ENCODE measurements at regions of chr15 and their contacts with region 1.

Region 1: GRCh38 chr15:23648920-23649515 is 1.4 kb upstream of the MAGEL2 start:
- DNase-seq: peak in 1 of 2 donors; percentile 25
- ATAC-seq: no peak
- H3K4me3 ChIP-seq: no peak overlapping the region
- H3K27ac ChIP-seq: no peak overlapping the region
- H3K4me1 ChIP-seq: peaks cover 0 to 3% (median 0%) of the 10 kb centered on the region in 9 donors
- H3K27me3 ChIP-seq: peaks cover 0 to 56% (median 32%) of the 10 kb centered on the region in 7 donors
- CTCF ChIP-seq: peak; percentile 22 to 66 (median 51)

Region 2: DNA sequence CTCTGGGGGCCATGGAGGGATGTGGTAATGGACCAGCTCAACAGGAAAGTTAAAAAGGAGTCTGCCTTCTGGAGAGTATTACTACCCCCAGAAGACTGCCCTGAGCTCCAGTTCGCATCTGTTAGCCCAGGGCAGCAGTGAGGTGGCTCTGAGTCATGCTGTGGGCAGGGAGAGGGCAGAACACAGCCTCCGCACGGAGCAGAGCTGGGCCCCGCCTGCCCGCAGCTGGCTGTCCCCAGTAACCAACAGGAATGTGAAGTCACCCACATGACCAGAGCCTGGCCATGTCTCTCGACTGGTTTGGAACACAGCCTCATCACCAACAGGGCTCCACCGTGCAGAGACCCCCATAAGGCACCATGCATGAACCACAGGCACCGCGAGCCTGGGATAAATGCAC is 731.0 kb before region 1 on chr15:
- intact Hi-C with region 1: no loop called
- DNase-seq: no peak
- ATAC-seq: no peak
- H3K4me3 ChIP-seq: no peak overlapping the region
- H3K27ac ChIP-seq: no peak overlapping the region
- H3K4me1 ChIP-seq: no peaks in the 10 kb centered on the region
- H3K27me3 ChIP-seq: no peaks in the 10 kb centered on the region
- CTCF ChIP-seq: no peak

Region 3: DNA sequence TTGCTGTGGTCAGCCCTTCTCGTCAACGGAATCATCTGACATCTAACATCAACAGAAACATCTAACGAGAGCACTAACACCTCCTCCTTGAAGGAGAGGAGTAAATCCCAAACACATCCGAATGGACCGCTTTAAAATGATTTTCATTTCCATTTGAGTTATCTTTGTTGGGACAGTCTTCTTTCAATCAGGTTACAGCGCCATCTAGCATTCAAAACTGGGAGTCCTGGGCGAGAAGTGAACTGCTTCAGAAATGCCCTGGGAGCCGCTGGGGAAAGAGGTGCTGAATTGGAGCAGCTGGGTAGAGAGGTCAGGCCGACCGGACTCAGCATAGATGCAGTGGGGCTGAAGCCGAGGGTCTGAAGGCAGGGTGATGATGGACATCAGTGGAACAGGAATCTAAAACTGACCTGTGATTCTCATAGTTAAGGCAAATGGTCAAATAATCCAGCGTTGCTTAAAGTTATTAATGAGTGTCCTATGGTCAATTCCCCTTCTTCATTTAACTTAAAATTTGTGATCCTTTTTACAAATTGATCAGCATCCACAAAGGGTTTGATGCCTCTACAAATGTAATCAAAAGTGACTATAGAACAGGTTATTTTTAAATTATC is 208.1 kb after region 1 on chr15:
- intact Hi-C with region 1: loop called in 7 of 10 experiments (anchors 5 to 10 kb)
- DNase-seq: peak in 1 of 2 donors; percentile 34
- ATAC-seq: no peak
- H3K4me3 ChIP-seq: no peak overlapping the region
- H3K27ac ChIP-seq: no peak overlapping the region
- H3K4me1 ChIP-seq: no peaks in the 10 kb centered on the region
- H3K27me3 ChIP-seq: peaks cover 0 to 19% (median 3%) of the 10 kb centered on the region in 7 donors
- CTCF ChIP-seq: peak in 7 of 9 donors; percentile 32 to 56 (median 36)

Region 4: DNA sequence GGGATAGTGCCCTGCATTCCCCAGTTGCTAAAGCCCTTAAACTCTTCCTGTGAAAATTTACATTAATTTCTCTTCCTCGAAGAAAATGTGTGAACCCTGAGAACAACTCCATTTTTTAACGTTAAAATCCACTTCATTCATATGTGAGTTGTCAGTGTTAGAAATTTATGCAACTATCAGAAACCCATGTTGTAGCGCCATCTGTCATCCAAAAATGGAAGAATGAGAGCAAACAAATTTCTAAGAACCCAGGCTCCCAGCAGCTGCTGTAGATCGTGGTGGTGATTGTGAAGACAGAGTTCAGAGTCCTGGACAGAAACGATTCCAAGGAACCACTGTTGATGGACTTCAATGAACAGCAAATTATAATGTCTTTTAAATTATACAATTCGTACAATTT is 217.8 kb after region 1 on chr15:
- intact Hi-C with region 1: loop called in 6 of 10 experiments (anchors 5 to 10 kb)
- DNase-seq: no peak
- ATAC-seq: no peak
- H3K4me3 ChIP-seq: no peak overlapping the region
- H3K27ac ChIP-seq: no peak overlapping the region
- H3K4me1 ChIP-seq: no peaks in the 10 kb centered on the region
- H3K27me3 ChIP-seq: peaks cover 0 to 20% (median 8%) of the 10 kb centered on the region in 7 donors
- CTCF ChIP-seq: peak in 3 of 9 donors; percentile 22 to 45 (median 31)

Region 5: DNA sequence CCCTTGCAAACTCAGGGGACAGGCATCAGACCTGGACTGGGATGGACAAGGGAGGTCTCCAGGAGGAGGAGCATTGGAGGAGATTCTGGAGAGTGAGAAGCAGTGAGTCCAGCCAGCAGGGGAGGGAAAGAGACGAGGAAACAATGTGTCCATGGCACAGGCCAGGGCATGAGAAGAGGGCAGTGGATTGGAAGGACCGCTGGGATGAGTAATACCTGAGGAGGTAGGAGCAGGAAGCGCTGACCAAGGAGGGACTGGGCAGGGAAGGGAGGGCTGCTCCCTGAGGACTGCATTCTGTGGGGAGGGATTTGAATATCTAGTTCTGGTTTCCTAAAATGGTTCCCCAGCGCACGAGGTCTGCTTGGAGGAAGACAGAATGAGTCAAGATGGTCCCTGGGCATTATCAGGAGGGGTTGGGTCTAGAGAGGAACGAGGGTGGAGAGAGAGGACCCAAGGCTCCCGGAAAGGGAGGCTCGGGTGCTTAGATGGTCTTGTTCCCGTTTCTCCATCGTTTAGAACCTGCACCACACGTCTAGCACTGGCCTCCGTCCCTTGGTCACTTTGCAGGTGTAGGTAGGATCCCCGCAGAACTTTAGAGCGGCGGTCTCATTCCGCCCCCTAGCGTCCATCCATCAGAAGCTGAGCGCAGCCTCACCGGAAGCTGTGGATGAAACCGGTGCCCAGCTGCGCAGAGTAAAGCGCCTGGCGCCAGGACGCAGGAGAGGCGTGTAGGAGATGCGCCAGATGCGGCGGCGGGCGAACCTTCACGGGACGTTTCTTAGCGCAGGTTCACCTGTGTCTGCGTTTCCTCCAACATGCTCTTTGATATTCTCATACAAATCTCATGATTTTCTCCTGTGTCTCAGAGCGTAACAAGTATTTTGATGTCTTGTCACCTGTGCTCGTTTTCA is 228.7 kb after region 1 on chr15:
- intact Hi-C with region 1: loop called in 1 of 10 experiments (anchors 5 kb)
- DNase-seq: peak; percentile 22 to 31
- ATAC-seq: peak in 6 of 8 donors; percentile 53 to 81 (median 62)
- H3K4me3 ChIP-seq: no peak overlapping the region
- H3K27ac ChIP-seq: no peak overlapping the region
- H3K4me1 ChIP-seq: no peaks in the 10 kb centered on the region
- H3K27me3 ChIP-seq: peaks cover 0 to 10% (median 0%) of the 10 kb centered on the region in 7 donors
- CTCF ChIP-seq: peak; percentile 41 to 65 (median 58)

Region 6: GRCh38 chr15:24318981-24319380 is 670.0 kb after region 1 on chr15:
- intact Hi-C with region 1: no loop called
- DNase-seq: no peak
- ATAC-seq: no peak
- H3K4me3 ChIP-seq: no peak overlapping the region
- H3K27ac ChIP-seq: no peak overlapping the region
- H3K4me1 ChIP-seq: no peaks in the 10 kb centered on the region
- H3K27me3 ChIP-seq: no peaks in the 10 kb centered on the region
- CTCF ChIP-seq: no peak

Measured in heart right ventricle (tissue), 16 donors.